ENCODE measurements at regions of chr5 and their contacts with region 1.

Region 1: DNA sequence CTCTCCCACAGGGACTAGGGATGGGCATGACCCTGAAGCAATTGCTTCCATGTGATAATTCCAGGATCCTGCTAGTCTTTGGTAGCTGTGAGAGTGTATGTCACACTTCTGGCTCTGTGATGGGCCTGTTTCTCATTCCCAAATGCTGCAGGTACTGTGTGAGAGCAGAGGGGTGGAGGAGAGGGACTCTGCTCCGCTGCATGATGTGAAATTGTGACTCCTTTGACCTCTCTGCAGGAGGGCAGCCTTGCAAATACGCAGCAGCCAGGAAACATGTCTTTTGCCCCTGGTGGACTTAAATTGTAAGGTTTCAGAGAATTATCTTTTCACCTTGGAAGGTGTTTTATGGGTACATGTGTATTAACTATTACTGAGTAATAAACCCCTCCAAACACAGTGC is 61.6 kb downstream of the SFXN1 start:
- DNase-seq: no peak
- H3K4me3 ChIP-seq: no peak overlapping the region
- H3K27ac ChIP-seq: no peak overlapping the region
- H3K4me1 ChIP-seq: peaks cover 8% of the 10 kb centered on the region
- H3K27me3 ChIP-seq: peaks cover 15% of the 10 kb centered on the region
- CTCF ChIP-seq: no peak

Region 2: DNA sequence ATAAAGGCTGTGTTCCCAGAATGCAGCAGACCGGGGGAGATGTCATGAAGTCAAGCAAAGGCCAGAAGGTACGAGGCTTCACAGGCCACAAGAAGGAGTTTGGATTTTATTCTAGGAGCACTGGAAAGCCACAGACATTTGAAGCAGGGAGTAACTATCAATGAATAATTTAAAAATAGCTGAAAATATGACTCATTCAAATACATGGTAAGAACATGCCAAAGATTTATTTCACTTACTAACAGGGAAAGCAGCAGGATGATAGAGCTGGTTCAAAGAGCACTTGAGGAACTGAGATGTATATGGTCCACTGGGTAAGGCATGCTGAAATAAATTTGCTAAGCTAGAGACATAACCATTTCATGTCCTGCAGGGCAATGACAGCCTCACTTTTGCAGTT is 762.4 kb before region 1 on chr5:
- CTCF ChIA-PET with region 1: no interaction called
- POLR2A ChIA-PET with region 1: interaction called, 11 read pairs
- intact Hi-C with region 1: no loop called
- DNase-seq: no peak
- H3K4me3 ChIP-seq: no peak overlapping the region
- H3K27ac ChIP-seq: no peak overlapping the region
- H3K4me1 ChIP-seq: no peaks in the 10 kb centered on the region
- H3K27me3 ChIP-seq: peaks cover 17% of the 10 kb centered on the region
- CTCF ChIP-seq: no peak

Region 3: DNA sequence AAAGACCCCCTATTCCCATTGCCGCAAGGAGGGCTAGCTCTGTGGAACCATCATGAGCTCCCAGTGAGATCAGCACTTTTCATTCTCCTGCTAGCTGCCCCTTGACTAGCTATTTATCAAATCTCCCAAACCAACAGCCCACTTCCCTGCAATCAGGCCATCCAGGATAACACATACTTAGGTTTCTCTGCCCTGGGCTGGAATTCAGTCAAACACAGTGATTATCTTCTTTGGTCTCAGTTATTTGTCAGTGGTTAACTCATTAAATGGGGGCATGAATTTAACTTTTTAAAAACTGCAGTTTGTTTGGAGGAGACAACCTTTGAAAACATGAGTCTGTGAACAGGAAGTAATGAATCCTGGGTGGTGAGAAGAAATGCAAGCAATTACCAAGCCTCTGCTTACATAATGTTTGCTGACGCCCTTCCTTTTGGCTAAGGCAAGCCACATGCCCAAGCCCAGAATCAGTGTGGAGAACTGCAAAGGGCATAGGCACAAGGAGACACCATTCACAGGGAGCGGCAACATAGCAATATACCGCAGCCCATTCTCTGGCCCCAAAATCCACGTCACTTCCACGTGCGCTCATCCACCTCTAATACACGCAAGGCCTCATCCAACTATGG is 370.9 kb before region 1 on chr5:
- CTCF ChIA-PET with region 1: no interaction called
- POLR2A ChIA-PET with region 1: no interaction called
- intact Hi-C with region 1: no loop called
- DNase-seq: no peak
- H3K4me3 ChIP-seq: no peak overlapping the region
- H3K27ac ChIP-seq: no peak overlapping the region
- H3K4me1 ChIP-seq: no peaks in the 10 kb centered on the region
- H3K27me3 ChIP-seq: peaks cover 4% of the 10 kb centered on the region
- CTCF ChIP-seq: no peak

Measured in A673 (cell line).